CD4-positive, alpha-beta memory T cell (primary cell): ENCODE measurements at regions of chr4 and their contacts with region 1.

Region 1: DNA sequence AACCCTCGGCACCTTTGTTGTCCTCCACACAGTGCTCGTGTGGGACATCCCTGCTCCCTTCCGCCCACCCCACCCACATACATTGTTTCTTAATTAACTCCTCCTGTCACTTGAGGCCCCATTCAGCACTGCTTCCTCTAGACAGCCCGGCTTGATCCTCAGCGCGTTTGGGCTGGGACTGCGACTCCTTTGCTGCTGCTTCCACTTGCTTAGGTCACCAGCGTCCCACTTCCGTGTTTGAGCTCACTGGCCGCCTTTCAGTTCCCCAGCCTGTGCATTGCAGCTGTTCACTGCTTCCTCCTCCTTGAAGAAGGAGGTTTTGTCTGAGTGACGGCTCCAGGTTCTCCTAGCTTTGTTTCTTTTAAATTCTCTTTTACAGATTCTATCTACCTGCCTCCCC is 16.1 kb downstream of the RNF4 start:
- DNase-seq: peak; percentile 64 to 82 (median 70)
- H3K4me3 ChIP-seq: peak overlapping the region; percentile 27 to 43
- H3K4me3 Mint-ChIP-seq: peak overlapping the region; percentile 53 to 92 (median 84)
- H3K27ac ChIP-seq: peak overlapping the region; percentile 52
- H3K27ac Mint-ChIP-seq: peak overlapping the region; percentile 75 to 94 (median 86)
- H3K4me1 ChIP-seq: peaks cover 79% of the 10 kb centered on the region
- H3K4me1 Mint-ChIP-seq: peaks cover 64 to 90% (median 76%) of the 10 kb centered on the region in 4 donors
- H3K27me3 ChIP-seq: no peaks in the 10 kb centered on the region
- H3K27me3 Mint-ChIP-seq: no peaks in the 10 kb centered on the region

Region 2: DNA sequence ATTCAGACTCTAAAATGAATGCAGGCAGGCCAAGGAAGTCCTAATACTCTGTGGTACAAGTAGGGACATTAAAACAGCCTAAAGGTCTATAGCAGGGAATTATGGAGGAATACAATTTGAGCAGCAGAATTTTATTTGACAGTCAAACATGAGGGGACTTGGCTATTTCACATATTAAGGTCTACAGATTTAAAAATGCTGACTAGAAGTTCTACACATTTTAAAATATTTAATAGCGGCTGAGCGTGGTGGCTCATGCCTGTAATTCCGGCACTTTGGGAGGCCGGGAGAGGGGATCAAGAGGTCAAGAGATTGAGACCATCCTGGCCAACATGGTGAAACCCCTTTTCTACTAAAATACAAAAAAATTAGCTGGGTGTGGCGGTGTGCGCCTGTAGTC is 253.9 kb before region 1 on chr4:
- CTCF ChIA-PET with region 1: no interaction called
- POLR2A ChIA-PET with region 1: no interaction called
- intact Hi-C with region 1: no loop called
- DNase-seq: no peak
- H3K4me3 ChIP-seq: no peak overlapping the region
- H3K4me3 Mint-ChIP-seq: no peak overlapping the region
- H3K27ac ChIP-seq: no peak overlapping the region
- H3K27ac Mint-ChIP-seq: peak overlapping the region in 1 of 7 donors; percentile 37
- H3K4me1 ChIP-seq: no peaks in the 10 kb centered on the region
- H3K4me1 Mint-ChIP-seq: peaks cover 10 to 35% (median 23%) of the 10 kb centered on the region in 4 donors
- H3K27me3 ChIP-seq: no peaks in the 10 kb centered on the region
- H3K27me3 Mint-ChIP-seq: no peaks in the 10 kb centered on the region

Region 3: DNA sequence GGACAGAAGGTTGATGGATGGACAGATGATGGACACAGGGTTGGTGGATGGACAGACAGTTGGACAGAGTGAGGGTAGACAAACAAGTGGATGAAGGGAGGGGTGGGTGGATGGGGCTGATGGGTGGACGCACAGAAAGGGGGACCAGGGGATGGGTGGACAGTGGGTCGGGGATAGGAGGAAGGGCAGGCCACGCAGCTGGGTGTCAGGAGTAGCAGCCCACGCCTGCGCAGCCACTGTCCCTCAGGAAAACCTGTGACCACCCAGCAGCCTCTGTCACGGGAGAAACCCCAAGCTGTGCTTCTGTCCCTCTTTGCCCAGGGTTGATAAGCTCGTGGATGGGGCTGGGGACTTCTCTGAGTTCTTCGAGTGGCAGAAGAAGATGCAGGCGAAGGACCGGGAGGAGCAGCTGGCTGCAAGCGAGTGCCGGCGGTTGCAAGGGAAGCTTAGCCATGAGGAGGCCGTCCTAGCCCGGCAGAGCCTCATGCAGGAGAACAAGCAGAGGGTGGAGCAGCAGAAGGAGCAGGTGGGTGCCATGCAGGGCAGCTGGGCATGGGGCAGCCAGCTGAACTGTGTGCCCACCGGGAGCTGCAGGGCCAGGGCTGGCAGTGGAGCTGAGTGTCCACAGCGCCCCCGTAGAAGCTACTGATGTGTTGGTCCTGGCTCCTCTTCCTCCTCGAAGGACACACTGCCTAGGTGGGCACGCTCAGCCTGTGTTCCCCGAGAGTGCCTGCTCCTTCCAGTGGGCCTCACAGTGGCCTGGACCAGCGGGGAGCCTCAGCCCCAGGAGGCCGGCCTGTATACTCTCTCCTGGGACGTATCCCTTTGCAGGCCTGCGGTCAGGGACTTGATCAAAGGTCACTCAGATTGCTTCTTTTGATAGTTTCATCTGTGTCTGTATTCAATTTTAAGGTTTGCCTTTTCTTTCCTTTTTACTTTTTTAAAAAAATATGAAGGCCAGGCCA is 32.9 kb before region 1 on chr4:
- CTCF ChIA-PET with region 1: no interaction called
- POLR2A ChIA-PET with region 1: no interaction called
- intact Hi-C with region 1: no loop called
- DNase-seq: no peak
- H3K4me3 ChIP-seq: no peak overlapping the region
- H3K4me3 Mint-ChIP-seq: no peak overlapping the region
- H3K27ac ChIP-seq: no peak overlapping the region
- H3K27ac Mint-ChIP-seq: peak overlapping the region in 1 of 7 donors; percentile 25
- H3K4me1 ChIP-seq: no peaks in the 10 kb centered on the region
- H3K4me1 Mint-ChIP-seq: no peaks in the 10 kb centered on the region
- H3K27me3 ChIP-seq: no peaks in the 10 kb centered on the region
- H3K27me3 Mint-ChIP-seq: no peaks in the 10 kb centered on the region

Region 4: DNA sequence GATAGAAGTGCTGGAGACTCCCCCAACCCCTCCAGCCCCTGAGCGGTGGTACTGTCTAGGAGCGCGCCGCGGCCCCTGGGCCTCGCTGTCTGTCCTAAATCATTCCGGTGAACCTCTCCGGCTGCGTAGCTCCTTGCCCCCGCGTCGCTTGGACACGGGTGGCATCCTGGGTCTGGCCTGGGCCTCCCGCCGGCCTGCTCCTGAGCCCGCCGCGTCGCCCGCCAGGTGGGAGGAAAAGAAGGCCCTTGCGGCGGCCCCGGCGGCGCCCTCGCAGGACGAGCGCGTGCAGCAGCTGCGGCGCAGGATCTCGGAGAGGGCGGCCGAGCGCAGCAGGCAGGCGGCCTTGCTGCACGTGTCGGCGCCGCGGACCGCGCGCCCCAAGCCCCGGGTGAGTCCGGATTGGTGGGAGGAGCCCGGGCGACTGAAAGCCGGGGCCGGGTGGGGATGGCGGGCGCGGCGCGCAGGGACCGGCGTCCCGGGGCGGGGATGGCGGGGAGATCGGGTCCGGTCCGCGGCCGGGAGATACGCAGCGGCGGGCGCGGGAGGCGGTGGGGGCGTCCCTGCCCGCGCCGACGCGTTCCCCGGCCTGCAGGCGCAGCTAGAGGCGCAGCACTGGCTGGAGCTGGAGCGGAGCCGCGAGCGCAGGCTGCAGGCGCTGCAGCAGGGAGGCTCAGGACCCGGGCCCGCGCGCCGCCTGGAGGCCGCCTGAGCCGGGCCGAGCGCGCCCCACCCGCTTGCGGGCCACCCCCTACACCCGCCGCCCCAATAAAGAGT is 22.6 kb before region 1 on chr4:
- CTCF ChIA-PET with region 1: interaction called, 10 read pairs
- POLR2A ChIA-PET with region 1: interaction called, 92 read pairs
- intact Hi-C with region 1: no loop called
- DNase-seq: peak; percentile 64 to 73 (median 71)
- H3K4me3 ChIP-seq: peak overlapping the region in 1 of 2 donors; percentile 46
- H3K4me3 Mint-ChIP-seq: peak overlapping the region; percentile 60 to 82 (median 80)
- H3K27ac ChIP-seq: no peak overlapping the region
- H3K27ac Mint-ChIP-seq: peak overlapping the region in 1 of 7 donors; percentile 62
- H3K4me1 ChIP-seq: peaks cover 16% of the 10 kb centered on the region
- H3K4me1 Mint-ChIP-seq: peaks cover 6 to 16% (median 6%) of the 10 kb centered on the region in 4 donors
- H3K27me3 ChIP-seq: no peaks in the 10 kb centered on the region
- H3K27me3 Mint-ChIP-seq: no peaks in the 10 kb centered on the region